CD8-positive, alpha-beta T cell (primary cell): ENCODE measurements at regions of chr4 and their contacts with region 1.

Region 1: GRCh38 chr4:159722052-159722451 is 619.2 kb downstream of the RAPGEF2 start:
- DNase-seq: no peak
- ATAC-seq: no peak
- H3K4me3 ChIP-seq: no peak overlapping the region
- H3K4me3 Mint-ChIP-seq: no peak overlapping the region
- H3K27ac ChIP-seq: no peak overlapping the region
- H3K27ac Mint-ChIP-seq: no peak overlapping the region
- H3K4me1 ChIP-seq: no peaks in the 10 kb centered on the region
- H3K4me1 Mint-ChIP-seq: no peaks in the 10 kb centered on the region
- H3K27me3 ChIP-seq: no peaks in the 10 kb centered on the region
- H3K27me3 Mint-ChIP-seq: no peaks in the 10 kb centered on the region
- CTCF ChIP-seq: no peak

Region 2: GRCh38 chr4:159706704-159707103 is 15.3 kb before region 1 on chr4:
- CTCF ChIA-PET with region 1: no interaction called
- POLR2A ChIA-PET with region 1: no interaction called
- intact Hi-C with region 1: loop called in 1 of 2 experiments (anchors 1 kb)
- DNase-seq: no peak
- ATAC-seq: no peak
- H3K4me3 ChIP-seq: no peak overlapping the region
- H3K4me3 Mint-ChIP-seq: no peak overlapping the region
- H3K27ac ChIP-seq: no peak overlapping the region
- H3K27ac Mint-ChIP-seq: no peak overlapping the region
- H3K4me1 ChIP-seq: no peaks in the 10 kb centered on the region
- H3K4me1 Mint-ChIP-seq: no peaks in the 10 kb centered on the region
- H3K27me3 ChIP-seq: no peaks in the 10 kb centered on the region
- H3K27me3 Mint-ChIP-seq: no peaks in the 10 kb centered on the region
- CTCF ChIP-seq: no peak